Heart right ventricle (tissue), 16 donors: ENCODE measurements at regions of chr9 and their contacts with region 1.

Region 1: DNA sequence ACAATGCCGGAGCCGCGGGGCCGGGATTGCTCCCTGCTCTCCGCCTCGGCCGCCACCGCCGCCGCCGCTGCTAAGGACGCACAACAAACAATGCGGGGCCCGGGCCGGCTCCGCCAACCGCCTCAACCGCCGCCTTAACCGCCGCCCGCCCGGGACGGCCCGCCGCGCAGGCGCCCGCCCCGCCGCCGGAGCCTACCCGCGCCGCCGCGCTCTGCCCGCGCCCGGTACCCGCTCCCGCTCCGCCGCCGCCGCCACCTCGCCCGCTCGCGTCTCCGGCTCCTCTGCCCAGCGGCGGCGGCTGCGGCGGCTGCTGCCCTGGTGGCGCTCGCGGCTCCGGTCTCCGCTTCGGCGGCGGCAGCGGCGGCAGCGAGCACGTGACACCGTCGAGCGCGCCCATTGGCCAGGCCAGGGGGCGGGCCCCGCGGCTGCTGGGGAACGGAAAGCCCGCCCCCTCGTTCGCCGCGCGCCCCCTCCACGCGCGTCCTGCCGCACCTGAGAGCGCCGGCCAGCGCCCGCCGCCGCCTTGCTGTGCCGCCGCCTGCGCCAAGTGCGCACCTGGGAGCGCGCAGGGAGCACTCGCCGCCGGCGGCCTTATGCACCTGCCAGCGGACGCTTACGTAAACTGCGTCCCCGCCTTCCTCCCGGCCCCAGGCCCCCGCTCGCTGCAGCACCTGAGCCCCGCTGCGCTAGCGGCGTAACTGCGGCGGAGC is at the start of gene STRBP:
- DNase-seq: peak; percentile 88 to 92
- ATAC-seq: peak; percentile 95 to 98 (median 97)
- H3K4me3 ChIP-seq: peak within 1 kb of the TSS; percentile 57 to 94 (median 86)
- H3K27ac ChIP-seq: peak within 1 kb of the TSS in 9 of 10 donors; percentile 47 to 83 (median 78)
- H3K4me1 ChIP-seq: peaks cover 0 to 18% (median 10%) of the 10 kb centered on the region in 9 donors
- H3K27me3 ChIP-seq: no peaks in the 10 kb centered on the region
- CTCF ChIP-seq: peak in 3 of 9 donors; percentile 10 to 23 (median 19)
- total RNA-seq, gene STRBP: 10.5 to 22.2 (median 13.8) TPM

Region 2: DNA sequence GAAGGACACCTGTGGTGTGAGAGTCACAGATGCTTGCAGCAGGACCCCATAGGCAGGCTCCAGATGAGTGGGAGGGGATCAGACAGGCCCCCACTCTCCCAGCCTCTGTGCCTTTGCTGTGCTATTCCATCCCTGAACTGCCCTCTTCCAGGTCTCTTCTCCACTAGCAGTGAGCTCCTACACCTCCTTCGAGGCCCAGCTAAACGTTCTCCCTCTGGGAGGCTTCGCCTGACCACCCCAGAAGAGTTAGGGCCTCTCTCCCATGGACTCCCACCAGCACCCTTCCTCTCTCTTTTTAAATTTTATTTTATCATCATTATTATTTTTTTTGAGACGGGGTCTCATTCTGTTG is 35.9 kb after region 1 on chr9:
- intact Hi-C with region 1: loop called in 1 of 10 experiments (anchors 1 kb)
- DNase-seq: no peak
- ATAC-seq: no peak
- H3K4me3 ChIP-seq: no peak overlapping the region
- H3K27ac ChIP-seq: no peak overlapping the region
- H3K4me1 ChIP-seq: peaks cover 0 to 25% (median 4%) of the 10 kb centered on the region in 9 donors
- H3K27me3 ChIP-seq: no peaks in the 10 kb centered on the region
- CTCF ChIP-seq: no peak

Region 3: GRCh38 chr9:123338710-123339665 is 70.6 kb after region 1 on chr9:
- intact Hi-C with region 1: loop called in 2 of 10 experiments (anchors 2 to 10 kb)
- DNase-seq: peak; percentile 34 to 43
- ATAC-seq: peak; percentile 61 to 84 (median 79)
- H3K4me3 ChIP-seq: peak overlapping the region in 9 of 10 donors; percentile 25 to 53 (median 44)
- H3K27ac ChIP-seq: peak overlapping the region; percentile 9 to 84 (median 74)
- H3K4me1 ChIP-seq: peaks cover 2 to 36% (median 21%) of the 10 kb centered on the region in 9 donors
- H3K27me3 ChIP-seq: no peaks in the 10 kb centered on the region
- CTCF ChIP-seq: no peak

Region 4: GRCh38 chr9:124066783-124067563 is 798.6 kb after region 1 on chr9:
- intact Hi-C with region 1: no loop called
- DNase-seq: no peak
- ATAC-seq: no peak
- H3K4me3 ChIP-seq: no peak overlapping the region
- H3K27ac ChIP-seq: no peak overlapping the region
- H3K4me1 ChIP-seq: no peaks in the 10 kb centered on the region
- H3K27me3 ChIP-seq: peaks cover 0 to 20% (median 4%) of the 10 kb centered on the region in 7 donors
- CTCF ChIP-seq: no peak